Activated B cell treated with CpG ODN at 0.5 μM for 24 hours (primary cell): ENCODE measurements at regions of chr2 and their contacts with region 1.

Region 1: GRCh38 chr2:120265006-120265405 is 12.4 kb downstream of the RALB start:
- DNase-seq: no peak
- ATAC-seq: no peak
- H3K4me3 Mint-ChIP-seq: peak overlapping the region; percentile 48
- H3K27ac Mint-ChIP-seq: no peak overlapping the region
- H3K4me1 Mint-ChIP-seq: peaks cover 49% of the 10 kb centered on the region
- H3K27me3 Mint-ChIP-seq: no peaks in the 10 kb centered on the region
- CTCF ChIP-seq: no peak

Region 2: DNA sequence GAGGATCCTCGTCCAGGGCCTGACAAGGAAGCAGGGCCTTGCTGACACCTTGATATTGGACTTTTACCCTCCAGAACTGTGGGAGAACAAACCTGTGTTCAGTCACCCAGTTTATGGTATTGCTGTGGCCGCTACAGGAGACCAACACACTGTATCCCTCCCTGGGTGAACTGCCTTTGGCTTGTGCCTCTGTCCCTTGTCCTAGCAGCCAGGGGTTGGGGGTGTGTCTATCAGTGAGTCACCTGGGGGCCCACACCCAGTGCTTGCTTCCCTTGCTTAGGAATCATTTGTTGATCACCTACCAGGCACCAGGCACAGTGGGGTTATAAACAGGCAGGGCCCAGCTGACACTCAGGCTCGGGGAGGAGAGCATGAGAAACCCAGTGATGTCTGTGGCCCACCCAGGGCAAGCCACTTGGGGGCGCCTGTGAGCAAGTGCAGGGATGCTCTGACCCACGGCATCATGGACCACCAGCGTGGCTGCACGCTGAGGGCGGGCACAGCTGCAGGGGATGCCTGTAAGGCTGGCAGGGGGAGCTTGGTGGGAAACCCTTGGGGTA is 58.9 kb before region 1 on chr2:
- CTCF ChIA-PET with region 1: no interaction called
- POLR2A ChIA-PET with region 1: no interaction called
- intact Hi-C with region 1: no loop called
- DNase-seq: no peak
- ATAC-seq: peak; percentile 52
- H3K4me3 Mint-ChIP-seq: no peak overlapping the region
- H3K27ac Mint-ChIP-seq: no peak overlapping the region
- H3K4me1 Mint-ChIP-seq: peaks cover 10% of the 10 kb centered on the region
- H3K27me3 Mint-ChIP-seq: no peaks in the 10 kb centered on the region
- CTCF ChIP-seq: no peak

Region 3: GRCh38 chr2:120239488-120240287 is 25.3 kb before region 1 on chr2:
- CTCF ChIA-PET with region 1: no interaction called
- POLR2A ChIA-PET with region 1: no interaction called
- intact Hi-C with region 1: no loop called
- DNase-seq: no peak
- ATAC-seq: no peak
- H3K4me3 Mint-ChIP-seq: no peak overlapping the region
- H3K27ac Mint-ChIP-seq: no peak overlapping the region
- H3K4me1 Mint-ChIP-seq: no peaks in the 10 kb centered on the region
- H3K27me3 Mint-ChIP-seq: no peaks in the 10 kb centered on the region
- CTCF ChIP-seq: no peak

Region 4: GRCh38 chr2:120287183-120288015 is 22.4 kb after region 1 on chr2:
- CTCF ChIA-PET with region 1: no interaction called
- POLR2A ChIA-PET with region 1: interaction called, 3 read pairs
- intact Hi-C with region 1: loop called (anchors 2 kb)
- DNase-seq: no peak
- ATAC-seq: peak; percentile 95
- H3K4me3 Mint-ChIP-seq: peak overlapping the region; percentile 53
- H3K27ac Mint-ChIP-seq: peak overlapping the region; percentile 89
- H3K4me1 Mint-ChIP-seq: peaks cover 19% of the 10 kb centered on the region
- H3K27me3 Mint-ChIP-seq: no peaks in the 10 kb centered on the region
- CTCF ChIP-seq: no peak

Region 5: GRCh38 chr2:120305296-120305695 is 40.3 kb after region 1 on chr2:
- CTCF ChIA-PET with region 1: no interaction called
- POLR2A ChIA-PET with region 1: interaction called, 14 read pairs
- intact Hi-C with region 1: no loop called
- DNase-seq: no peak
- ATAC-seq: no peak
- H3K4me3 Mint-ChIP-seq: no peak overlapping the region
- H3K27ac Mint-ChIP-seq: no peak overlapping the region
- H3K4me1 Mint-ChIP-seq: peaks cover 20% of the 10 kb centered on the region
- H3K27me3 Mint-ChIP-seq: no peaks in the 10 kb centered on the region
- CTCF ChIP-seq: no peak

Region 6: DNA sequence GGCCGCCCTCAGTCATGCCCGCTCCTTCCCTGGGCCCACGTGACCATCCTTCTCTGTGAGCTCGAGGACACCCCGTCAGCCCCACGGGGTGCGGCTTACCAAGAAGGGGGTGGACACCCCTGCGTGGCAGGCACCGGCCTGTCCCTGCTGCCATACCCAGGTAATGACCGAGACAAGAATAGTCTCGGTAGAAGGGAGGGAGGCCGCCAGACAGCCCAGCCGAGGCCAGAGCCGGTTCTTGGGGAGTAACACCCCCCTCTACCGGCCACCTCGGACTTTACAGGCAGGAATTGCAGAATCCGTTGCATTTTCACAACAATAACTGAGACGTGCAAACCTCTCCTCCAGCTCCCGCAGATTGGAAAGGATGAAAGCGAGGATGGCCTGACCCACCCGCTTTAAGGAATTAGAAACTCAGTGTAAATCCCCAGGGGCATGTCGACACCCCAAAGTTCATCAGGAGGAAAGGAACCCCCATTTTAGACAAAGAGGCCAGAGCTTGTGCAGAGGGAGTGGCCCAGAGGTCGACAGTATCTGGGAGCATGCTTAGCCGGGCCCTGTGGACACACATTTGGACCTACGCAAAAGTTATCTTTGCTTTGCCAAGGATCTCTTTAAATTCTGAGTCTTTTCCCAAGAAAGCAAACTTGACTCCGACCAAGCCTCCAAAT is 410.6 kb after region 1 on chr2:
- CTCF ChIA-PET with region 1: no interaction called
- POLR2A ChIA-PET with region 1: no interaction called
- intact Hi-C with region 1: no loop called
- DNase-seq: no peak
- ATAC-seq: peak; percentile 25
- H3K4me3 Mint-ChIP-seq: no peak overlapping the region
- H3K27ac Mint-ChIP-seq: no peak overlapping the region
- H3K4me1 Mint-ChIP-seq: peaks cover 4% of the 10 kb centered on the region
- H3K27me3 Mint-ChIP-seq: peaks cover 17% of the 10 kb centered on the region
- CTCF ChIP-seq: no peak